ENCODE measurements at regions of chr1 and their contacts with region 1.

Region 1: DNA sequence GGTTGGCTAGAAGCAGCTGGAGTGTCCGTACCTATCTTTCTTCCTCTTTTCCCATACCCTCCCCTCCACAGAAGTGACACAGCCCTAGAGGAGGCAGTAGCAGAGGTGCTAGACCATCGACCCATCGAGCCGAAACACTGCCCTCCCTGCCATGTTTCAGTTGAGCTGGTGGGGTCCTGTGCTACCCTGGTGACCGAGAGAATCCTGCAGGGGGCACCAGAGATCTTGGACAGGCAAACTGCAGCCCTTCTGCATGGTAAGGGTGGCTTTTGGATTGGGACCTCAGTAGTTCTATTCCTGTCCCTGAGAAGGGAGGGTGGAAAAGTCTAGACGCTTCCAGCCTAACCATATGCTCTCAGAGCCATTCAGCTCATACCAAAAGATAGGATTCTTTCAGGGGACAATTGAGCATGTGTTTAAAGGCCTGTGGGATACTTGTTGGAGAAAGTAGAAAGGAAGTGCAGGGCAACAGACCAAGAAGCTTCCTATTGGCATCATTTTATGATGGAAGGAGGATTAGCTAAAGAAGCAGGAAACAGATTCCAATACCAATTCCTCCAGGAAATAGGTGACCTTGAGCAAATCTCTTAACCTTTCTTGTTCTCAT is 11.7 kb upstream of the BNIPL start:
- DNase-seq: no peak
- ATAC-seq: peak; percentile 100
- H3K4me3 ChIP-seq: no peak overlapping the region
- H3K27ac ChIP-seq: no peak overlapping the region
- H3K4me1 ChIP-seq: no peaks in the 10 kb centered on the region
- H3K27me3 ChIP-seq: no peaks in the 10 kb centered on the region
- CTCF ChIP-seq: peak; percentile 79 to 91 (median 84)
- EP300 ChIP-seq: no peak
- POLR2A ChIP-seq: no peak
- RAD21 ChIP-seq: peak; percentile 86

Region 2: GRCh38 chr1:151006327-151007052 is 18.2 kb before region 1 on chr1 and contains the start of gene MINDY1:
- CTCF ChIA-PET with region 1: interaction called, 10 read pairs
- POLR2A ChIA-PET with region 1: interaction called, 6 read pairs
- RAD21 ChIA-PET with region 1: interaction called, 5 read pairs
- SMC1A ChIA-PET with region 1: interaction called, 9 read pairs
- in situ Hi-C with region 1: no loop called
- intact Hi-C with region 1: no loop called
- DNase-seq: peak; percentile 32
- ATAC-seq: peak; percentile 71
- H3K4me3 ChIP-seq: peak within 1 kb of the TSS; percentile 73
- H3K27ac ChIP-seq: peak within 1 kb of the TSS; percentile 73
- H3K4me1 ChIP-seq: peaks cover 12% of the 10 kb centered on the region
- H3K27me3 ChIP-seq: no peaks in the 10 kb centered on the region
- CTCF ChIP-seq: peak; percentile 38 to 57 (median 43); a peak in 4 of 6 replicates
- EP300 ChIP-seq: no peak
- POLR2A ChIP-seq: peak; percentile 60
- RAD21 ChIP-seq: peak; percentile 39; the same call in 1 of the 2 replicates
- polyA plus RNA-seq, gene MINDY1: 0.48 to 0.49 TPM

Region 3: GRCh38 chr1:151036363-151036762 is 11.7 kb after region 1 on chr1 and contains the start of gene BNIPL:
- CTCF ChIA-PET with region 1: interaction called, 11 read pairs
- POLR2A ChIA-PET with region 1: interaction called, 3 read pairs
- RAD21 ChIA-PET with region 1: no interaction called
- SMC1A ChIA-PET with region 1: interaction called, 3 read pairs
- in situ Hi-C with region 1: no loop called
- intact Hi-C with region 1: no loop called
- DNase-seq: no peak
- ATAC-seq: no peak
- H3K4me3 ChIP-seq: no peak within 1 kb of the TSS
- H3K27ac ChIP-seq: no peak within 1 kb of the TSS
- H3K4me1 ChIP-seq: no peaks in the 10 kb centered on the region
- H3K27me3 ChIP-seq: no peaks in the 10 kb centered on the region
- CTCF ChIP-seq: no peak
- EP300 ChIP-seq: no peak
- POLR2A ChIP-seq: no peak
- RAD21 ChIP-seq: no peak
- polyA plus RNA-seq, gene BNIPL: 0.05 TPM

Region 4: DNA sequence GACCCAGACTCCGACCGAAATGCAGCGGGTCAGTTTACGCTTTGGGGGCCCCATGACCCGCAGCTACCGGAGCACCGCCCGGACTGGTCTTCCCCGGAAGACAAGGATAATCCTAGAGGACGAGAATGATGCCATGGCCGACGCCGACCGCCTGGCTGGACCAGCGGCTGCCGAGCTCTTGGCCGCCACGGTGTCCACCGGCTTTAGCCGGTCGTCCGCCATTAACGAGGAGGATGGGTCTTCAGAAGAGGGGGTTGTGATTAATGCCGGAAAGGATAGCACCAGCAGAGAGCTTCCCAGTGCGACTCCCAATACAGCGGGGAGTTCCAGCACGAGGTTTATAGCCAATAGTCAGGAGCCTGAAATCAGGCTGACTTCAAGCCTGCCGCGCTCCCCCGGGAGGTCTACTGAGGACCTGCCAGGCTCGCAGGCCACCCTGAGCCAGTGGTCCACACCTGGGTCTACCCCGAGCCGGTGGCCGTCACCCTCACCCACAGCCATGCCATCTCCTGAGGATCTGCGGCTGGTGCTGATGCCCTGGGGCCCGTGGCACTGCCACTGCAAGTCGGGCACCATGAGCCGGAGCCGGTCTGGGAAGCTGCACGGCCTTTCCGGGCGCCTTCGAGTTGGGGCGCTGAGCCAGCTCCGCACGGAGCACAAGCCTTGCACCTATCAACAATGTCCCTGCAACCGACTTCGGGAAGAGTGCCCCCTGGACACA is 23.4 kb after region 1 on chr1:
- CTCF ChIA-PET with region 1: interaction called, 26 read pairs
- POLR2A ChIA-PET with region 1: interaction called, 8 read pairs
- RAD21 ChIA-PET with region 1: interaction called, 4 read pairs
- SMC1A ChIA-PET with region 1: interaction called, 6 read pairs
- in situ Hi-C with region 1: no loop called
- intact Hi-C with region 1: no loop called
- DNase-seq: no peak
- ATAC-seq: peak; percentile 85
- H3K4me3 ChIP-seq: peak overlapping the region; percentile 87
- H3K27ac ChIP-seq: peak overlapping the region; percentile 49
- H3K4me1 ChIP-seq: peaks cover 8% of the 10 kb centered on the region; the same call in 1 of the 2 replicates
- H3K27me3 ChIP-seq: no peaks in the 10 kb centered on the region
- CTCF ChIP-seq: peak in 2 of 3 experiments; percentile 47 to 54; a peak in 5 of 6 replicates
- EP300 ChIP-seq: no peak
- POLR2A ChIP-seq: peak; percentile 77; the same call in 1 of the 2 replicates
- RAD21 ChIP-seq: no peak

Region 5: DNA sequence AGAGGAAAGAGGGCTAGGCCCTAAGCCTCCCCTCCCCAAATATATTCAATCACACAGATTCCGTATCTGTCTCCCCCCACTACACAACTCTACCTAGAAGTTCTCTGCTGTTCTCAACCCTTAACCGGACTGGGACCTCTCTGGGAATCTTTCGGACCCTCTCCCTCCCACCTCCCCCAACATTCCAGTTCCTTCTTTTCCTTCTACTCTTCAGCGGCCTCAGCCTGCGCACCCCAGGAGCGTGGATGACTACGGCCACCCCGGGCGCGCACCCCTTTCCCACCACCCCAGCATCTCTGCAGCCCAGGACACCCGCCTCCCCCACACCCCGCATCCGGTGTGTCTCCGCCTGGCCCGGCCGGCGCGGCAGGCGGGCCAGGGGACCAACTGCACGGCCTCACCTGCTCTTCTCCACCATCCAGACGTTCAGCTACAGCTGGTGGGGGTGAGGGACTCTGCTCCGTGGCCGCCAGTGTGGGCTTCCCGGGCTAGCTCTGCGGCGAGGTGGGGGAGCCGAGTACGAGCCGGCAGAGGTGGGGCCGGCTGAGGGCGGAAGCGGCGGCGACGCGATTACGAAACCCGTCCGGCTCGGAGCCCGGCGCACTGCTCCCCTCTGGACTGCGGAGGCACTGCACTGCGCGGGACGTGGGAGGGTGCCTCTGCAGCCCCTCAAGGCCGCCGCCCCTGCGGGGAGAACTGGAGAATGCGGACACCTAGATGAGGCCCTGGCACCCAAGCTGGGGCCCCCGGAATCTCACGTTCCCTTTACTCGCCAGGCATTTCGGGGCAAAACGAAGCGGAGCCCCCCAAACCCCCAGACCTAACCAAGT is 34.6 kb after region 1 on chr1 and contains the start of gene CDC42SE1:
- CTCF ChIA-PET with region 1: interaction called, 4 read pairs
- POLR2A ChIA-PET with region 1: interaction called, 4 read pairs
- RAD21 ChIA-PET with region 1: no interaction called
- SMC1A ChIA-PET with region 1: interaction called, 12 read pairs
- in situ Hi-C with region 1: no loop called
- intact Hi-C with region 1: loop called (anchors 2 kb)
- DNase-seq: peak; percentile 55
- ATAC-seq: peak; percentile 86
- H3K4me3 ChIP-seq: peak within 1 kb of the TSS; percentile 93
- H3K27ac ChIP-seq: peak within 1 kb of the TSS; percentile 97
- H3K4me1 ChIP-seq: peaks cover 28% of the 10 kb centered on the region
- H3K27me3 ChIP-seq: no peaks in the 10 kb centered on the region
- CTCF ChIP-seq: peak; percentile 75 to 90 (median 84)
- EP300 ChIP-seq: no peak
- POLR2A ChIP-seq: peak; percentile 98
- RAD21 ChIP-seq: 0 out of 2 replicates have a peak, but pooled peaks have one; percentile 1
- polyA plus RNA-seq, gene CDC42SE1: 36.9 to 38.0 TPM

Region 6: DNA sequence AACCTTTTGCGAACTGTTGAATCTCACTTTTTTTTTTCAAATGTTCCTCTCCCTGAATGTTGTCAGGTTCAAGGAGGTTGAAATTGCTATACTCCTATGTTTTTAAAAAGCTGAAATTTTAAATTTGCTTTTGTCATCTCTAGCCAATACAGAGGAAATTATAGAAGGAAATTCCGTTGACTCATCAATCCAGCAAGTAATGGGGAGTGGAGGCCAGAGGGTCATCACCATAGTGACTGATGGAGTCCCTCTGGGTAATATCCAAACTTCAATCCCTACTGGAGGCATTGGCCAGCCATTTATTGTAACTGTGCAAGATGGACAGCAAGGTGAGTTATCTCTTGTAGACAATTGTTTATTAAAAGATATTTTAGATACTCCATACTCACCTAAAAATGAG is 82.3 kb after region 1 on chr1:
- CTCF ChIA-PET with region 1: interaction called, 40 read pairs
- POLR2A ChIA-PET with region 1: no interaction called
- RAD21 ChIA-PET with region 1: interaction called, 26 read pairs
- SMC1A ChIA-PET with region 1: no interaction called
- in situ Hi-C with region 1: no loop called
- intact Hi-C with region 1: no loop called
- DNase-seq: no peak
- ATAC-seq: no peak
- H3K4me3 ChIP-seq: no peak overlapping the region
- H3K27ac ChIP-seq: no peak overlapping the region
- H3K4me1 ChIP-seq: no peaks in the 10 kb centered on the region
- H3K27me3 ChIP-seq: no peaks in the 10 kb centered on the region
- CTCF ChIP-seq: no peak
- EP300 ChIP-seq: no peak
- POLR2A ChIP-seq: no peak
- RAD21 ChIP-seq: no peak

Region 7: GRCh38 chr1:151254217-151255213 is 229.9 kb after region 1 on chr1 and contains the start of gene PSMD4:
- CTCF ChIA-PET with region 1: interaction called, 11 read pairs
- POLR2A ChIA-PET with region 1: interaction called, 4 read pairs
- RAD21 ChIA-PET with region 1: no interaction called
- SMC1A ChIA-PET with region 1: no interaction called
- in situ Hi-C with region 1: no loop called
- intact Hi-C with region 1: no loop called
- DNase-seq: peak; percentile 96
- ATAC-seq: peak; percentile 95
- H3K4me3 ChIP-seq: peak within 1 kb of the TSS; percentile 81
- H3K27ac ChIP-seq: peak within 1 kb of the TSS; percentile 87
- H3K4me1 ChIP-seq: peaks cover 2% of the 10 kb centered on the region; the same call in 1 of the 2 replicates
- H3K27me3 ChIP-seq: no peaks in the 10 kb centered on the region
- CTCF ChIP-seq: no peak
- EP300 ChIP-seq: no peak
- POLR2A ChIP-seq: peak; percentile 94
- RAD21 ChIP-seq: no peak
- polyA plus RNA-seq, gene PSMD4: 129 to 190 TPM

Measured in GM12878 (cell line).